Colonic mucosa (tissue), 4 donors: ENCODE measurements at regions of chr6 and their contacts with region 1.

Region 1: DNA sequence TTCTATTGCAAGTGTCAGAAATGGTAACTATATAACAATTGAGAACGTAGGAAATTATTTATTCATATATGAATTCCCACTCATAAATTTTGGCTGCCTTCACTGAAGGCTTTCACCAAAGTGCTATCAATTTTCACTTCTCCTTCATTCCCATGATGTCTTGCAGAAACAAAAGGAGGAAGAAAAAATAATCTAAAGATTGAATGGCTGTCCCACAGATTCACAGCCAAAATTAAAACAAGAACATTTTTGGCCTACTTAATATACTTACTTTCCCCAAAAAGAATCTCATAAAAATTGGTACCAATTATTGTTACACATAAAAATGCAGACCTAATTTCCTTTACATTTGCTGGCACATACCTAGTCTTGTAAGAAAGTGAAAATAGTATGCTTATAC is 616.1 kb downstream of the CD109 start:
- DNase-seq: no peak
- H3K4me3 ChIP-seq: no peak overlapping the region
- H3K27ac ChIP-seq: no peak overlapping the region
- H3K4me1 ChIP-seq: no peaks in the 10 kb centered on the region
- H3K27me3 ChIP-seq: no peaks in the 10 kb centered on the region
- CTCF ChIP-seq: no peak

Region 2: DNA sequence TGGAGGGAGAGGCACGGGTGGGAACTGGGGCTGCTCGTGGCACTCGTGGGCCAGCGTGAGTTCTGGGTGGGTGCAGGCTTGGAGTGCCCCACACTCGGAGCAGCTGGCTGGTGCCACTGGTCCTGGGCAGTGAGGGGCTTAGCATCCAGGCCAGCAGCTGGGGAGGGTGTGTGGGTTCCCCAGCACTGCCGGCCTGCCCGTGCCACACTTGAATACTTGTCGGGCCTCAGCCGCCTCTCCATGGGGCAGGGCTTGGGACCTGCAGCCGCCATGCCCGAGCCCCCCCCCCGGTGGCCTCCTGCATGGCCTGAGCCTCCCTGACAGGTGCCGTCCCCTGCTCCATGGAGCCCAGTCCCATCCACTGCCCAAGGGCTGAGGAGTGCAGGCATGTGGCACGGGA is 408.9 kb before region 1 on chr6:
- intact Hi-C with region 1: no loop called
- DNase-seq: no peak
- H3K4me3 ChIP-seq: no peak overlapping the region
- H3K27ac ChIP-seq: no peak overlapping the region
- H3K4me1 ChIP-seq: no peaks in the 10 kb centered on the region
- H3K27me3 ChIP-seq: no peaks in the 10 kb centered on the region
- CTCF ChIP-seq: no peak

Region 3: GRCh38 chr6:74333406-74333805 is 21.3 kb after region 1 on chr6:
- intact Hi-C with region 1: loop called (anchors 2 kb)
- DNase-seq: no peak
- H3K4me3 ChIP-seq: no peak overlapping the region
- H3K27ac ChIP-seq: no peak overlapping the region
- H3K4me1 ChIP-seq: no peaks in the 10 kb centered on the region
- H3K27me3 ChIP-seq: no peaks in the 10 kb centered on the region
- CTCF ChIP-seq: no peak

Region 4: GRCh38 chr6:74568861-74569260 is 256.8 kb after region 1 on chr6:
- intact Hi-C with region 1: no loop called
- DNase-seq: no peak
- H3K4me3 ChIP-seq: no peak overlapping the region
- H3K27ac ChIP-seq: no peak overlapping the region
- H3K4me1 ChIP-seq: no peaks in the 10 kb centered on the region
- H3K27me3 ChIP-seq: no peaks in the 10 kb centered on the region
- CTCF ChIP-seq: no peak